B cell (primary cell): ENCODE measurements at regions of chr1 and their contacts with region 1.

Region 1: DNA sequence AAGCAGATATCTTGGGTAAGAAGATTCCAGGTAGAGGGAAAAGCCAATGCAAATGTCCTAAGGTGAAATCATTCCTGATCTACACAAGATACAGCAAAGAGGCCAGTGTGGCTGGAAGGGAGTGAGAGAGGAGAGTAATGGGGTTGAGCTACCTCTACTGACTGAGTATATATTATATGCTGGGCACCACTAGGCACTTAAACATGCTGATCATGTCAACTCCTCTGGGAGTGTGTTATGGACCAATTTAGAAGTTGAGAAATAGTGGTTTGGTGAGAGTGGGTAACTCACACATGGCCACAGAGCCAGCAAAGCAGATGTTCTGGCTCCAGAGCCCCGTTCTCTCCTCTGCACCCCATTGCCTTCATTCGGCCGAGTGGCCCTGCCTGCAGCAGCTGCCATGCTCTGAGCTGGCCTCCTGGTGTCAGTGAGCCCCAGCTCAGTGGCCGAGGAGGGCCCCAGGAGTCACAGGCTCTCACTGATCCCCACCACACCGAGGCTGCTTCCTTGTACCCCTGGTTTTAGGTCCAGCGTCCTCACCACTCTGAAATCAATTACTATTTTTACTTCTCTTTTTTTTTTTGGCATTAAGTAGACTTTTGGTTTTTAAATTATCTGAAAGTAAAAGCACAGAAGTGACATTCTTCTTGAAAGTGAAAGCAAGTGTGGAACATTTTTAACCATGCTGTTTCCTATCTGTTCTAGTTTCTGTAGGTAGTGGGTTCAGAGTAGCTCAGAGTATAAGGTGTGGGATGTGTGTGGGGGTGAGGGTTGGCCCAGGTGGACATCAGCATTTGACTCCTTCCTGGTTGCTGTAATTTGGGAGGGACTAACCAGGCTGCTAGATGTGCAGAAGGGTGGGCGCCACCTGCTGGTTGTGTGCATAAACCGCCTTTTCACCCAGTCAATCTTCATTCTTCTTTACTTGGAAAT is 45.8 kb upstream of the CRNN start:
- DNase-seq: peak; percentile 84
- ATAC-seq: peak; percentile 70
- H3K4me3 ChIP-seq: peak overlapping the region in 3 of 5 experiments; percentile 26 to 48 (median 39)
- H3K4me3 Mint-ChIP-seq: peak overlapping the region; percentile 87
- H3K27ac ChIP-seq: peak overlapping the region; percentile 65 to 80
- H3K27ac Mint-ChIP-seq: peak overlapping the region; percentile 97
- H3K4me1 ChIP-seq: peaks cover 14 to 20% of the 10 kb centered on the region in 2 donors
- H3K4me1 Mint-ChIP-seq: peaks cover 25% of the 10 kb centered on the region
- H3K27me3 ChIP-seq: peaks cover 0 to 2% (median 0%) of the 10 kb centered on the region in 4 experiments
- H3K27me3 Mint-ChIP-seq: peaks cover 3% of the 10 kb centered on the region
- CTCF ChIP-seq: peak; percentile 82

Region 2: GRCh38 chr1:151992345-151993086 is 467.3 kb before region 1 on chr1:
- CTCF ChIA-PET with region 1: no interaction called
- POLR2A ChIA-PET with region 1: no interaction called
- intact Hi-C with region 1: no loop called
- DNase-seq: peak; percentile 39
- ATAC-seq: no peak
- H3K4me3 ChIP-seq: peak overlapping the region in 4 of 5 experiments; percentile 52 to 78 (median 72)
- H3K4me3 Mint-ChIP-seq: peak overlapping the region; percentile 94
- H3K27ac ChIP-seq: peak overlapping the region in 1 of 2 donors; percentile 73
- H3K27ac Mint-ChIP-seq: peak overlapping the region; percentile 93
- H3K4me1 ChIP-seq: peaks cover 13 to 26% of the 10 kb centered on the region in 2 donors
- H3K4me1 Mint-ChIP-seq: peaks cover 30% of the 10 kb centered on the region
- H3K27me3 ChIP-seq: no peaks in the 10 kb centered on the region
- H3K27me3 Mint-ChIP-seq: no peaks in the 10 kb centered on the region
- CTCF ChIP-seq: no peak

Region 3: GRCh38 chr1:152047730-152048402 is 412.0 kb before region 1 on chr1:
- CTCF ChIA-PET with region 1: interaction called, 26 read pairs
- POLR2A ChIA-PET with region 1: no interaction called
- intact Hi-C with region 1: loop called (anchors 1 kb)
- DNase-seq: peak; percentile 88
- ATAC-seq: peak; percentile 92
- H3K4me3 ChIP-seq: peak overlapping the region in 4 of 5 experiments; percentile 14 to 30 (median 19)
- H3K4me3 Mint-ChIP-seq: peak overlapping the region; percentile 76
- H3K27ac ChIP-seq: peak overlapping the region; percentile 93 to 97
- H3K27ac Mint-ChIP-seq: peak overlapping the region; percentile 97
- H3K4me1 ChIP-seq: peaks cover 17 to 19% of the 10 kb centered on the region in 2 donors
- H3K4me1 Mint-ChIP-seq: peaks cover 16% of the 10 kb centered on the region
- H3K27me3 ChIP-seq: no peaks in the 10 kb centered on the region
- H3K27me3 Mint-ChIP-seq: peaks cover 5% of the 10 kb centered on the region
- CTCF ChIP-seq: peak; percentile 48

Region 4: GRCh38 chr1:152318148-152318547 is 141.7 kb before region 1 on chr1:
- CTCF ChIA-PET with region 1: no interaction called
- POLR2A ChIA-PET with region 1: no interaction called
- intact Hi-C with region 1: no loop called
- DNase-seq: no peak
- ATAC-seq: no peak
- H3K4me3 ChIP-seq: no peak overlapping the region
- H3K4me3 Mint-ChIP-seq: no peak overlapping the region
- H3K27ac ChIP-seq: no peak overlapping the region
- H3K27ac Mint-ChIP-seq: no peak overlapping the region
- H3K4me1 ChIP-seq: no peaks in the 10 kb centered on the region
- H3K4me1 Mint-ChIP-seq: no peaks in the 10 kb centered on the region
- H3K27me3 ChIP-seq: peaks cover 0 to 12% (median 0%) of the 10 kb centered on the region in 4 experiments
- H3K27me3 Mint-ChIP-seq: peaks cover 4% of the 10 kb centered on the region
- CTCF ChIP-seq: no peak

Region 5: DNA sequence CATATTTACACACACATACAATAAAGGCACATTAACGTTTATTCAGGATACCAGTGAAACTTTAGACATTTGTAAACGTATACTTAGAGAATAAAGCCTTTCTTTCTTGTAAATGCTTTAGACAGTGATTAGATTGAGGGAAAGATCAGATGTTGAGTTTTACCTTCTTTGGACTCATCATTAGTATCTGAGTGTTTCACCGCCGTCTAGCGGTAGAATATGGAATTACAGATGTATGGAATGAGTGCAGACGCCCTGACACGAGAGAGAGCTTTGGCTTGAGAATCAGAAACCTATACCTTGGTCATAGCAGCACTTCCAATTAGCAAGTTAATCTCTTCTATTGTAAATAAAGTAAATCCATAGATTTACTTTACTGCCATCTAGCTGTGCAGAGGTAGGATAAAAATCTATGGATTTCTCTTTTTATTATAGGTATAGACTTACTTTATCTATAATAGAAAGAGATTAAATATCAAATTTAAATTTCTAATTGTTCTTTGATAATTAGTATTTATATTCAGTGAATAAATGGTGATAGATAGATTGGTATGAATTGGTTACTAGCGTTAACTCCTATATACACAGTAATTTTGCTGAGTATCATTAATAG is 112.6 kb before region 1 on chr1:
- CTCF ChIA-PET with region 1: interaction called, 52 read pairs
- POLR2A ChIA-PET with region 1: no interaction called
- intact Hi-C with region 1: loop called (anchors 1 kb)
- DNase-seq: peak; percentile 66
- ATAC-seq: peak; percentile 45
- H3K4me3 ChIP-seq: no peak overlapping the region
- H3K4me3 Mint-ChIP-seq: no peak overlapping the region
- H3K27ac ChIP-seq: no peak overlapping the region
- H3K27ac Mint-ChIP-seq: no peak overlapping the region
- H3K4me1 ChIP-seq: no peaks in the 10 kb centered on the region
- H3K4me1 Mint-ChIP-seq: no peaks in the 10 kb centered on the region
- H3K27me3 ChIP-seq: peaks cover 0 to 5% (median 2%) of the 10 kb centered on the region in 4 experiments
- H3K27me3 Mint-ChIP-seq: peaks cover 8% of the 10 kb centered on the region
- CTCF ChIP-seq: peak; percentile 96

Region 6: DNA sequence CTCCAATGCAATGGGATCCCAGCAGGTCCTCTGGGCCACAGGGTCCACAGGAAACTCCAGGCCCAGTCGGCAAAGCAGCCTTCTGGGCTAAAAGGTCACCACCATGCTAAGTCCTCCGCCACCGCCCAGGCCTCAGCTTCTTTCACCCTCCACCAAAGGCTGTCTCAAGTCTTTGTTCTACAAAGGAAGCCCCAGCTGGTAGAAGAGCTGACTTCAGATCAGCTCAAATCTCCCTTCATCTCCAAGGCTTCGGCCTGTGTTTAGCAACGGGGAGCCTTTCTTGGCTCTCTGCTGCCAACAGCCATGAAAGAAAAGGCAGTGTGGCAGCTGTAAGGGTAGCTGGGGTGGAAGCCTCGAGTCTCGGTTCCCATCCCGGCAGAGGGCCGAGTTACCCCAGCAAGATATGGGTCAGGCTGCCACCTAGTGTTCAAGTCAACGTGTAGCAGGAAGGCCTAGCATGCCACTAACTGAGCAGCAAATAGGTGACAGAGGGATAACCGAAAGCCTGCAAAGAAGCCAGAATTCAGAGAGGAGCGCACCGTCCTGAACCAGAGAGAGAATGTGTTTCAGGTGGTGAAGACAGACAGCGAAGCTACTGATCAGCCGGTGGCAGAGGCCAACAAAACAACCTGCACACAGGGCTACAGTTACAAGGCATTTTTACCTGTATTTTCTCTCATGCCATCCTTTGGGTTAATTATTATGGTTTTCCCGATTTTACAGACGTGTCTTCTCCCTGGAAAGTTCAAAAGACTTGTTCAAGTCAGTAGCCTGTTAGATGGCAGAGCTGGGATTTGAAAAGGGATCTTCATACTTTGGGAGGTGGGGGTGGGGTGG is 19.0 kb before region 1 on chr1:
- CTCF ChIA-PET with region 1: interaction called, 39 read pairs
- POLR2A ChIA-PET with region 1: no interaction called
- intact Hi-C with region 1: loop called (anchors 1 kb)
- DNase-seq: peak; percentile 78
- ATAC-seq: peak; percentile 95
- H3K4me3 ChIP-seq: no peak overlapping the region
- H3K4me3 Mint-ChIP-seq: no peak overlapping the region
- H3K27ac ChIP-seq: no peak overlapping the region
- H3K27ac Mint-ChIP-seq: no peak overlapping the region
- H3K4me1 ChIP-seq: peaks cover 0 to 3% of the 10 kb centered on the region in 2 donors
- H3K4me1 Mint-ChIP-seq: peaks cover 2% of the 10 kb centered on the region
- H3K27me3 ChIP-seq: peaks cover 0 to 19% (median 3%) of the 10 kb centered on the region in 4 experiments
- H3K27me3 Mint-ChIP-seq: peaks cover 28% of the 10 kb centered on the region
- CTCF ChIP-seq: peak; percentile 79

Region 7: DNA sequence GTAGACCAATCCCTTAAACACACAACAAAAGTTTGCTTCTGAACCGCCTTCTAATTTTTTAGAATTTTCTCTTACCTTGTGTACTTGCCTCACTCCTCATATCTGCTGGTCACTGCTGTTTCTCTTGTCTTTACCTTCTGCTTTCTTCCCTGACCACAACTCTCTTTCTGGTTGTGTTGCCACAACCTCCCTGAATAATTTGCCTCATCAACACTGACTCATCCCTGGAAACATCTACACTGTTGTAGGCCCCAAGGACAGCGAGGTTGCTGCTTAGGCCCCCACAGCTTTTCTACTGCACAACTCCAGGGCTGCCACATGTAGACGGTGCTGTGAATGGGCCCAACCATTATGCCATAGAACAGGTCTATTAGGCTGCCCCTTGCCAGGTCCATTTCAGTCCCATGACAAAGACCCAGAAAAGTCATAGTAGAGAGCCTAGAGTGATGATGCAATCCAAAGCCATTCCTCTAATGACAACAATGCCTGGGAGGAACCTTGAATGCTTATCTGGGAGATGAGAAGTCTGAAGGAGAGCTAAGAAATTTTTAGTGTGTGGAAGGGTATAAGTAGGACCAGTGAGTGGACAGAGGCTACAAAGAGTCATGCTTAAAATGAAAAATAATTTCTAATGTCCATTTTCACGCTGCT is 14.2 kb after region 1 on chr1:
- CTCF ChIA-PET with region 1: interaction called, 23 read pairs
- POLR2A ChIA-PET with region 1: no interaction called
- intact Hi-C with region 1: no loop called
- DNase-seq: no peak
- ATAC-seq: no peak
- H3K4me3 ChIP-seq: no peak overlapping the region
- H3K4me3 Mint-ChIP-seq: no peak overlapping the region
- H3K27ac ChIP-seq: no peak overlapping the region
- H3K27ac Mint-ChIP-seq: no peak overlapping the region
- H3K4me1 ChIP-seq: no peaks in the 10 kb centered on the region
- H3K4me1 Mint-ChIP-seq: no peaks in the 10 kb centered on the region
- H3K27me3 ChIP-seq: peaks cover 0 to 13% (median 5%) of the 10 kb centered on the region in 4 experiments
- H3K27me3 Mint-ChIP-seq: peaks cover 16% of the 10 kb centered on the region
- CTCF ChIP-seq: no peak